Endothelial cell of umbilical vein (primary cell): ENCODE measurements at regions of chr1 and their contacts with region 1.

Region 1: GRCh38 chr1:183915625-183916510 is 110.9 kb downstream of the RGL1 start:
- DNase-seq: peak; percentile 97
- H3K4me3 ChIP-seq: no peak overlapping the region
- H3K27ac ChIP-seq: peak overlapping the region; percentile 59
- H3K4me1 ChIP-seq: peaks cover 32% of the 10 kb centered on the region
- H3K27me3 ChIP-seq: no peaks in the 10 kb centered on the region
- CTCF ChIP-seq: peak; percentile 68 to 74
- POLR2A ChIP-seq: peak; percentile 54

Region 2: GRCh38 chr1:183281553-183282091 is 634.2 kb before region 1 on chr1:
- CTCF ChIA-PET with region 1: interaction called, 6 read pairs
- POLR2A ChIA-PET with region 1: no interaction called
- dilution Hi-C with region 1: no loop called
- intact Hi-C with region 1: loop called (anchors 5 kb)
- DNase-seq: peak; percentile 92
- H3K4me3 ChIP-seq: no peak overlapping the region
- H3K27ac ChIP-seq: no peak overlapping the region
- H3K4me1 ChIP-seq: peaks cover 12% of the 10 kb centered on the region
- H3K27me3 ChIP-seq: no peaks in the 10 kb centered on the region
- CTCF ChIP-seq: peak; percentile 83 to 91
- POLR2A ChIP-seq: no peak

Region 3: GRCh38 chr1:183385340-183386144 is 530.3 kb before region 1 on chr1:
- CTCF ChIA-PET with region 1: no interaction called
- POLR2A ChIA-PET with region 1: no interaction called
- dilution Hi-C with region 1: no loop called
- intact Hi-C with region 1: no loop called
- DNase-seq: no peak
- H3K4me3 ChIP-seq: no peak overlapping the region
- H3K27ac ChIP-seq: no peak overlapping the region
- H3K4me1 ChIP-seq: no peaks in the 10 kb centered on the region
- H3K27me3 ChIP-seq: peaks cover 6 to 7% of the 10 kb centered on the region in 2 experiments
- CTCF ChIP-seq: no peak
- POLR2A ChIP-seq: no peak

Region 4: GRCh38 chr1:183655562-183656075 is 260.2 kb before region 1 on chr1:
- CTCF ChIA-PET with region 1: interaction called, 307 read pairs
- POLR2A ChIA-PET with region 1: interaction called, 4 read pairs
- dilution Hi-C with region 1: no loop called
- intact Hi-C with region 1: loop called (anchors 1 kb)
- DNase-seq: peak; percentile 81
- H3K4me3 ChIP-seq: no peak overlapping the region
- H3K27ac ChIP-seq: no peak overlapping the region
- H3K4me1 ChIP-seq: peaks cover 27% of the 10 kb centered on the region
- H3K27me3 ChIP-seq: no peaks in the 10 kb centered on the region
- CTCF ChIP-seq: peak; percentile 73 to 81
- POLR2A ChIP-seq: no peak

Region 5: GRCh38 chr1:183711741-183712361 is 204.0 kb before region 1 on chr1:
- CTCF ChIA-PET with region 1: interaction called, 39 read pairs
- POLR2A ChIA-PET with region 1: no interaction called
- dilution Hi-C with region 1: no loop called
- intact Hi-C with region 1: loop called (anchors 1 kb)
- DNase-seq: peak; percentile 60
- H3K4me3 ChIP-seq: no peak overlapping the region
- H3K27ac ChIP-seq: peak overlapping the region; percentile 39
- H3K4me1 ChIP-seq: peaks cover 8% of the 10 kb centered on the region
- H3K27me3 ChIP-seq: no peaks in the 10 kb centered on the region
- CTCF ChIP-seq: peak in 1 of 2 donors; percentile 7
- POLR2A ChIP-seq: no peak

Region 6: DNA sequence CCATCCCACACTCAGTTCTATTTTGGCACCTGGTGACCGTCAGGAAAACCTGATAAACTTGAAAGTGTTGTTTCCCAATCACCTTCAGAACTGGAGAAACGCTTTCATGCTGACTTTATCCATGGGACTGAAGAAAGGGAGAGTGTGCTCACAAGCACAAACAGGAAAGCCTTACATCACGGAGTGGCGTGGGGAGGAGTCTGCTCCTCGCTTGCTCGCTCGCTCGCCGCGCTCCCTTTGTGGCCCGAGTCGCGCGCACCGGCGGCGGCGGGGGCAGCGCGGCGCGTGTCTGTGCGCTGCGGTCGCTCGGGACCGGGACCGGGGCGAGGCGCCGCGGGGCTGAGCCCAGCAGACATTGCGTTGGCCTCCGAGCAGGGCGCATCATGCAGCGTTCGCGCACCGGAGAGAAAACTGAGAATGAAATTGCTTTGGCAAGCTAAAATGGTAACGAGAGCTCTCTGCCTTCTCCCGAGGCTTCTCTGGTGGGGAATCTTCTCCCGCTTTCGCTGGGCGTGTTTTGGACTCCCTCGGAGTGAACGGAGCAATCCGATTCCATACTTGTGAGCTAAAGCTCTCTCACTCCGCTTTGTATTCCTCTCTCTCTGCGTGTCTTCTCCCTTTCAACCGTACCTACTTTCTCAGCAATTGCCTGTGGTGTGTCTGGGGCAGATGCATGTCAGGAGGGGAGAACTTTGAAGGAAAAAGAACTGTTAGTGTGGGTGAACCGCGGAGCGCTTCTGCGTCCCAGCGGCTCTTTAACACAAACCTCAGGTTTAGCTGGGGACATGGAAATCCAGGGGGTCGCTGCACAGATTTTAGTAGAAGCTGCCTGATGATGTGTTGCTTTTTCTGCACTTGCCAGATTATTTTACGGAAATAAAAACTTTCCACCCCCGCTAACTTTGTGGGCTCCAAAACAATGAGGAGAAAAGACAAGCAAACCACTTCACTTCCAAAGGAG is 110.7 kb before region 1 on chr1 and contains the start of gene RGL1:
- CTCF ChIA-PET with region 1: interaction called, 44 read pairs
- POLR2A ChIA-PET with region 1: interaction called, 4 read pairs
- dilution Hi-C with region 1: no loop called
- intact Hi-C with region 1: loop called (anchors 1 kb)
- DNase-seq: peak; percentile 89
- H3K4me3 ChIP-seq: peak within 1 kb of the TSS; percentile 51 to 96 (median 89)
- H3K27ac ChIP-seq: peak within 1 kb of the TSS; percentile 88
- H3K4me1 ChIP-seq: peaks cover 25% of the 10 kb centered on the region
- H3K27me3 ChIP-seq: no peaks in the 10 kb centered on the region
- CTCF ChIP-seq: no peak
- POLR2A ChIP-seq: peak; percentile 90
- total RNA-seq, gene RGL1: 35.3 and 38.4 TPM in 2 replicates

Region 7: GRCh38 chr1:183871142-183871541 is 44.7 kb before region 1 on chr1:
- CTCF ChIA-PET with region 1: interaction called, 8 read pairs
- POLR2A ChIA-PET with region 1: no interaction called
- dilution Hi-C with region 1: no loop called
- intact Hi-C with region 1: loop called (anchors 1 kb)
- DNase-seq: peak; percentile 93
- H3K4me3 ChIP-seq: peak overlapping the region in 1 of 3 experiments; percentile 15
- H3K27ac ChIP-seq: peak overlapping the region; percentile 99
- H3K4me1 ChIP-seq: peaks cover 63% of the 10 kb centered on the region
- H3K27me3 ChIP-seq: no peaks in the 10 kb centered on the region
- CTCF ChIP-seq: no peak
- POLR2A ChIP-seq: peak; percentile 62

Region 8: DNA sequence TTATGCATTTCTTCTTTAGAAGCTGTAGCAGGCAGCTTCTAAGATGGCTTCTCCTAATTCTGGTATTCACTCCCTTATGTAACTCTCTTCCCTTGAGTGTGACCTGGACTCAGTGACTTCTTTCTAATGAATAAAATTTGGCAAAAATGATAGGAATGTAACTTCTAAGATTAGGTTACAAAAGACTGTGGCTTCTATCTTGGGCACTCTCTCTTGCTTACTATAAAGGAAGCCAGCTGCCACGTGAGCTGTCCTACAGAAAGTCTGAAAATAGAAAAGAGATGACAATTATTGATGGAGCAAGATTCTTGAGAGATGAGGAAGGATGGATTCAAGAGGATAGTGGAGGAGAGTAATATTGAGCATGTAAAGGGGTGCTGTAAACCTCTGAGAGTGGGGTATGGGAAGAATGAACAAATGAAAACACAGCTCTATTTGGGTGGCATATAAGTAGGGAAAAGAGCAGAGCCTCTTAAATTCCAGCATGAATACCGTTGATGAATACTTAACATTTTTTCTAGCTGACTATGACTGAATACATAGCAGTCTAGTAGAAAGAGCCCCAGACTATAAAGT is 141.1 kb after region 1 on chr1:
- CTCF ChIA-PET with region 1: no interaction called
- POLR2A ChIA-PET with region 1: no interaction called
- dilution Hi-C with region 1: no loop called
- intact Hi-C with region 1: no loop called
- DNase-seq: no peak
- H3K4me3 ChIP-seq: no peak overlapping the region
- H3K27ac ChIP-seq: no peak overlapping the region
- H3K4me1 ChIP-seq: peaks cover 7% of the 10 kb centered on the region
- H3K27me3 ChIP-seq: no peaks in the 10 kb centered on the region
- CTCF ChIP-seq: no peak
- POLR2A ChIP-seq: no peak

Region 9: DNA sequence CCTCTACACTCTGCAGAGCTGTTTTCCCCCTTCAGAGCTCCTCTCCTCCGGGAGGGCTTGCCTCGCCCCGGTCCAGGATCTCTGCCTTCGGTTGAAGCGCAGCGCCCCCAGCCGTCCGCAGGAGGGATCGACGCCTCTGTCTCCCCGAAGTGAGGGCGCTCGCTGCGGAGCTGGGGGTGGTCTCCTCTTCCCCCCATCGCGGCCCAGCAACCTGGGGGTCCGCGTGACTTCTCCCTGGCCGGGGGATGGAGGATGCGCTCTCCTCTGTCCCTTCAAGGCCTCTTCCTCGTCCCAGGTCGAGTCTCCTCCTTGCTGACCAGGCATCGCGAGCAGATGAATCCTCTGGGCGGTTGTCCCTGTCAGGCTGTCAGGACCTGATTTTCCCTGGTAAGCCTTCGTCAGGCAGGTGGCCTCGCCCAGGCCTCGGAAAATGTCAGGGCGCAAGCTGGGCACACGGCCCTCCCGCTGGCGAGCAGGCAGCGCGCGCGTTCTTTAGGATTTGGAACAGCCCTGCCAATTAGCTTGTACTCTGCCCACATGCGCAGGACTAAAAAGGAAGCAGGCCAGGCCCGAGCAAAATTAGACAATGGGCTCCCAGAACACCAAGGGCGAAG is 748.3 kb after region 1 on chr1:
- CTCF ChIA-PET with region 1: interaction called, 20 read pairs
- POLR2A ChIA-PET with region 1: no interaction called
- dilution Hi-C with region 1: no loop called
- intact Hi-C with region 1: loop called (anchors 5 kb)
- DNase-seq: peak; percentile 56
- H3K4me3 ChIP-seq: peak overlapping the region in 1 of 3 experiments; percentile 6
- H3K27ac ChIP-seq: no peak overlapping the region
- H3K4me1 ChIP-seq: no peaks in the 10 kb centered on the region
- H3K27me3 ChIP-seq: peaks cover 2 to 7% of the 10 kb centered on the region in 2 experiments
- CTCF ChIP-seq: peak; percentile 89 to 97
- POLR2A ChIP-seq: no peak